Left colon (tissue), 2 donors: ENCODE measurements at regions of chr12 and their contacts with region 1.

Region 1: GRCh38 chr12:51980051-51980808 is 26.5 kb upstream of the TAMALIN start:
- DNase-seq: peak in 1 of 2 donors; percentile 65
- ATAC-seq: peak; percentile 90

Region 2: GRCh38 chr12:51798501-51798900 is 181.7 kb before region 1 on chr12:
- intact Hi-C with region 1: no loop called
- DNase-seq: no peak
- ATAC-seq: no peak

Region 3: GRCh38 chr12:51891843-51892242 is 88.4 kb before region 1 on chr12:
- intact Hi-C with region 1: loop called in 1 of 2 experiments (anchors 5 kb)
- DNase-seq: no peak
- ATAC-seq: no peak

Region 4: GRCh38 chr12:51923501-51924271 is 56.5 kb before region 1 on chr12:
- intact Hi-C with region 1: loop called in 1 of 2 experiments (anchors 10 kb)
- DNase-seq: peak in 1 of 2 donors; percentile 80
- ATAC-seq: peak; percentile 70